Endothelial cell of umbilical vein (primary cell): ENCODE measurements at regions of chr17 and their contacts with region 1.

Region 1: GRCh38 chr17:50853015-50853615 is 13.0 kb downstream of the TOB1 start:
- DNase-seq: peak; percentile 53
- H3K4me3 ChIP-seq: no peak overlapping the region
- H3K27ac ChIP-seq: no peak overlapping the region
- H3K4me1 ChIP-seq: peaks cover 10% of the 10 kb centered on the region
- H3K27me3 ChIP-seq: peaks cover 7 to 16% of the 10 kb centered on the region in 2 experiments
- CTCF ChIP-seq: no peak
- POLR2A ChIP-seq: no peak

Region 2: DNA sequence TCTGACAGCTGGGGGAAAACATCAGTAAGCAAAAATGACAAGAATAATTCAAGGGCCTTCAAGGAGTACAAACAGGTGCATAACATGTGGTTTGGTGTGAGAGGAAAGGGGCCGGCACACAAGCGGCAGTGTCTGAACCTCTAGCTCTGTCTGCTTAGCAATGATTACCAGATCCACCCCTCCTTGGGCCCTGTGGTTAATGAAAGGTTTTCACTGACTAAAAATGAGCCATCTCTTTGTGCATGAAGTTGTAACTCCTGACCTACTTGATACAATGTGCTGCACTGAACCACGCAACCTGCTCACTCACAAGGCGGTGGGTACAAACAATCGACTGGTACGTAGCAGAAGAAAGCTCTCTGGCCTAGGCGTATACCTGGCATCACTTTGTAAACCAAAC is 1104.3 kb before region 1 on chr17:
- CTCF ChIA-PET with region 1: no interaction called
- POLR2A ChIA-PET with region 1: no interaction called
- dilution Hi-C with region 1: no loop called
- intact Hi-C with region 1: no loop called
- DNase-seq: no peak
- H3K4me3 ChIP-seq: no peak overlapping the region
- H3K27ac ChIP-seq: no peak overlapping the region
- H3K4me1 ChIP-seq: no peaks in the 10 kb centered on the region
- H3K27me3 ChIP-seq: no peaks in the 10 kb centered on the region
- CTCF ChIP-seq: no peak
- POLR2A ChIP-seq: no peak

Region 3: DNA sequence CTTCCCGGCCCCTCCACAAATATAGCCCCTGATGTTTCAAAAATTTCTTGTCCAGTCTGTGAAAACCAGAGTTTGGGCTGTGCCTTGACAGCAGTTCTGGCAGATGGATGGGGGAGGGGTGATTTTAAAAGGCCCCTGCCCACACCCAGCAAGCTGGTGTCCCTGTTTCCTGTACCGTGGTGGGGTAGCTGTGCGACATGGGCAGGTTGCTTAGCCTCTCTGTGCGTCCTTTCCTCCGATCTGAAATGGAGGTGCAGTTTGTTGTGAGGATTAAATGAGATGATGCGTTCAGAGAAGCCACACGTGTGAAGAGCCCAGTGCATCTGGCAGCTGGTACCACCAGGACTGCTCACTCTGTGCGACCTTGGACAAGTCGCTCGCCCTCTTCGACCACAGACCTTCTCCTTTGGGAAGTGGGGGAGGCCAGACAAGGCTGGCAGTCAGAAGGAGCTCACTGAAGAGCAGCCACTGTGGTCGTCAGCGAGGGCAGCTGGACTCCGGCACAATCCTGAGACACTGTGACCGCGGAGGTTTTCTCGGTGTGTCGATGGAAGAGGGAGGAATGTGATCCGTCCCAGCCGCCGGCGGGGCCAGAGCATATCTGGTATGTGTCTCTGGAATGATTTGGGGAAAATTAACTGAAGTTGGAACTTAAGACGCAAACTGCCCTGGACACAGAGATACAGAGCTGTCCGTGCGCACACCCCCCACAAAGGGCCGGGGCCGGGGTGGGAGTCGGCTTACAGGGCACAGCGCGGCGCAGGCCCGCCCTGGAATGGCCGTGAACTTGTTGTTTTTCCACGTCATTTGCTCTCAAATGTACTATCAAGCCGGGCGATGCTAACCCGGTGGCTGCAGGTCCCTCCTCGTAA is 18.4 kb before region 1 on chr17:
- CTCF ChIA-PET with region 1: interaction called, 16 read pairs
- POLR2A ChIA-PET with region 1: no interaction called
- dilution Hi-C with region 1: no loop called
- intact Hi-C with region 1: no loop called
- DNase-seq: no peak
- H3K4me3 ChIP-seq: no peak overlapping the region
- H3K27ac ChIP-seq: no peak overlapping the region
- H3K4me1 ChIP-seq: no peaks in the 10 kb centered on the region
- H3K27me3 ChIP-seq: no peaks in the 10 kb centered on the region
- CTCF ChIP-seq: no peak
- POLR2A ChIP-seq: no peak

Region 4: GRCh38 chr17:50931144-50931908 is 78.2 kb after region 1 on chr17:
- CTCF ChIA-PET with region 1: interaction called, 11 read pairs
- POLR2A ChIA-PET with region 1: no interaction called
- dilution Hi-C with region 1: no loop called
- intact Hi-C with region 1: no loop called
- DNase-seq: peak; percentile 82
- H3K4me3 ChIP-seq: peak overlapping the region; percentile 37 to 67 (median 61)
- H3K27ac ChIP-seq: peak overlapping the region; percentile 66
- H3K4me1 ChIP-seq: peaks cover 11% of the 10 kb centered on the region
- H3K27me3 ChIP-seq: no peaks in the 10 kb centered on the region
- CTCF ChIP-seq: no peak
- POLR2A ChIP-seq: no peak

Region 5: GRCh38 chr17:50949989-50950881 is 97.1 kb after region 1 on chr17:
- CTCF ChIA-PET with region 1: interaction called, 343 read pairs
- POLR2A ChIA-PET with region 1: interaction called, 3 read pairs
- dilution Hi-C with region 1: no loop called
- intact Hi-C with region 1: loop called (anchors 1 kb)
- DNase-seq: peak; percentile 58
- H3K4me3 ChIP-seq: no peak overlapping the region
- H3K27ac ChIP-seq: no peak overlapping the region
- H3K4me1 ChIP-seq: peaks cover 7% of the 10 kb centered on the region
- H3K27me3 ChIP-seq: no peaks in the 10 kb centered on the region
- CTCF ChIP-seq: peak; percentile 61 to 78
- POLR2A ChIP-seq: no peak